ENCODE measurements at regions of chr15 and their contacts with region 1.

Region 1: DNA sequence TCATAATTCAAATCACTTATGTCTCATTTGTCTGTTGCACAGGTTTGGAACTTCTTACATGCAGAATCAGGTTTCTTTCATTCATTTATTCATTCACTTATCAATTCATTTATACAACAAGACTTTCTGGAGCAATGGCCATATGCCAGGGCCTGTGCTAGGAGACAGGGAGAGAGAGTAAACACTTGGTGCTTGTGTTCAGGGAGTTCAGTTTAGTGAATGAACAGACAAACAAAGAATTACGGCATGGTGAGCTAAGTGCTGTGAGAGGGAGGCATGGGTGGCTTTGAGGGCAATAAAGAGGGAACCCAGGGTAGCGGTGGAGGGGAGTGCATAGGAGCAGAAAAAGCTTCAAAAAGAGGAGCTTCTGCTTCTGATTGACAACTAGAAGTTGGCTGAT is 8.5 kb upstream of the IREB2 start:
- DNase-seq: no peak
- H3K4me3 ChIP-seq: no peak overlapping the region
- H3K27ac ChIP-seq: no peak overlapping the region
- H3K4me1 ChIP-seq: no peaks in the 10 kb centered on the region
- H3K27me3 ChIP-seq: no peaks in the 10 kb centered on the region; the same call in 1 of the 2 replicates
- CTCF ChIP-seq: no peak
- EP300 ChIP-seq: no peak
- RAD21 ChIP-seq: no peak

Region 2: GRCh38 chr15:78399091-78399490 is 30.4 kb before region 1 on chr15:
- CTCF ChIA-PET with region 1: no interaction called
- POLR2A ChIA-PET with region 1: no interaction called
- DNase-seq: no peak
- H3K4me3 ChIP-seq: no peak overlapping the region
- H3K27ac ChIP-seq: no peak overlapping the region
- H3K4me1 ChIP-seq: no peaks in the 10 kb centered on the region; a peak in 1 of 4 replicates
- H3K27me3 ChIP-seq: no peaks in the 10 kb centered on the region
- CTCF ChIP-seq: no peak
- EP300 ChIP-seq: no peak
- RAD21 ChIP-seq: no peak

Region 3: DNA sequence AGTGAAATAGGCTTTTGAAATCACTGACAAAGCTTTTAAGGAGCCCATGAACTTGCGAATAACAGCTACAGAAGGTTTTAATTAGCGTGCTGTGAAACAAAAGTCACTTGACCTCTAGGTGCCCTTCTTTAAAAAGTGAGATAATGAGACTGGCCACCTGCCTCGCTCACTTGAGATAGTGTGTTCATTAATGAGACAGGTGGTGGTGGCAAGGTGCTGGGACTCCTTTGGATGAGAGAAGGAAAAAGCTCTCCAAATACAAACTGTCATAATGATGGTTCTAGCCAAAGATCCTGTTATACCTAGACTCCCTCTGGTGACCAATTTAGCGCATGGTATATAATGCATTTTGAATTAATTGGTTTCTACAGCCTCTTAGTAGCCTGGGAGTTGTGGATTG is 14.2 kb before region 1 on chr15:
- CTCF ChIA-PET with region 1: interaction called, 15 read pairs
- POLR2A ChIA-PET with region 1: no interaction called
- DNase-seq: no peak
- H3K4me3 ChIP-seq: no peak overlapping the region
- H3K27ac ChIP-seq: no peak overlapping the region
- H3K4me1 ChIP-seq: peaks cover 0 to 14% of the 10 kb centered on the region in 2 experiments; a peak in 2 of 4 replicates
- H3K27me3 ChIP-seq: no peaks in the 10 kb centered on the region
- CTCF ChIP-seq: peak; percentile 52
- EP300 ChIP-seq: no peak
- RAD21 ChIP-seq: peak; percentile 74

Measured in SK-N-SH (cell line).